RWPE1 (cell line): ENCODE measurements at regions of chr12 and their contacts with region 1.

Region 1: DNA sequence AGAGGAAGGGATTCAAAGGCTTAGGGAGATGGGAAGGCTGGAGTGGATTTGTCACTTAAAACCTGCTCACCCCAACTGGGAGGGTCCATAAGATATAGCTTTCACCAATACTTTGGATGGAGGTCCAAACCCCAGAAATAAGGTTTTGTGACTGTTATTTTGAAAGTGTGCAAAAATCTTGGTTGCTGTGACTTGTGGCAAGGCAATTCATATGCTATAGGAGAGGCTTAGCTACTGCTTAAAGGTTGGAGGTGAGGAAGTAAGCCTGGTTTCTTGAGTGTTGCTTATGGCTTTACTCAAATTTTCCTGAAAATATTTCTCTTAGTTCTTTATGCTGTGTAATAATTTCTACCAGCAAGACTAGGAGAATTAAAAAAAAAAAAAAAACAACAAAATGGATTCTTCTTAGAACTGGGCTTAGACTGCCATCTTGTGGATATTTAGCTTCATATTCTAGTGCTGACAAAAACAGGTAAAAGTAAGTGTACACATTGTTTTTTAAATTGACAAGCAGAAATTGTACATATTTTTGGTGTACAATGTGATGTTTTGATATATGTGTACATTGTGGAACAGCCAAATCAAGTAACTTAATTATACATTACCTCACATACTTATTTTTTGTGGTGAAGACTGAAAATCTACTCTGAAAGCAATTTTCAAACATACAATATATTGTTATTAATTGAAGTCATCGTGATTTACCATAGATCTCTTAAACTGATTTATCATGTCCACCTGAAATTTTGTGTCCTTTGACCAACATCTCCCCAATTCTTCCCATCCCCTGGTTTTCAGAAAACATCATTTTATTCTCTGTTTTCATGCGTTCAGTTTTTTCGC is 23.0 kb downstream of the PDE6H start:
- DNase-seq: peak; percentile 18
- H3K27ac ChIP-seq: no peak overlapping the region
- CTCF ChIP-seq: peak; percentile 55

Region 2: GRCh38 chr12:14810953-14811483 is 184.8 kb before region 1 on chr12:
- CTCF ChIA-PET with region 1: interaction called, 17 read pairs
- POLR2A ChIA-PET with region 1: no interaction called
- DNase-seq: peak; percentile 11
- H3K27ac ChIP-seq: no peak overlapping the region
- CTCF ChIP-seq: no peak

Region 3: DNA sequence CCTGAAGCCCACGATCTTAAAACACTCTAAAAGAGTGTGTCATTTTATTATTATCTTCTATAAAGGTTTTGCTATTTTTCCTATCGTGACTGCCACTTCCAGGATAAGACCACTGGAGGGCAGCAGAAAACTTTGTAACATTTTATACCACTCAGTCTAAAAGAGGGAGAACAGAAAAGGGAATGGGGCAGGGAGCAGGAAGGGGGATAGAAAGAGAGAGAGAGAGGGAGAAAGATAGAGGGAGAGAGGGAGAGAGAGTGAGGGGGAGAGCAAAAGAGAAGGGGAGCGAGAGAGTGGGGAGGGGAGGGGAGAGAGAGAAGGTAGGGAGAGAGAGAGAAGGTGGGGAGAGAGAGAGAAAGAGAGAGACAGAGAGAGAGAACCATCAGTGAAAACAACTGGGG is 150.5 kb before region 1 on chr12:
- CTCF ChIA-PET with region 1: interaction called, 14 read pairs
- POLR2A ChIA-PET with region 1: no interaction called
- DNase-seq: peak; percentile 65
- H3K27ac ChIP-seq: no peak overlapping the region
- CTCF ChIP-seq: peak; percentile 60

Region 4: GRCh38 chr12:14920475-14921126 is 75.2 kb before region 1 on chr12:
- CTCF ChIA-PET with region 1: no interaction called
- POLR2A ChIA-PET with region 1: no interaction called
- DNase-seq: no peak
- H3K27ac ChIP-seq: no peak overlapping the region
- CTCF ChIP-seq: no peak